GM12878 (cell line): ENCODE measurements at regions of chr7 and their contacts with region 1.

Region 1: DNA sequence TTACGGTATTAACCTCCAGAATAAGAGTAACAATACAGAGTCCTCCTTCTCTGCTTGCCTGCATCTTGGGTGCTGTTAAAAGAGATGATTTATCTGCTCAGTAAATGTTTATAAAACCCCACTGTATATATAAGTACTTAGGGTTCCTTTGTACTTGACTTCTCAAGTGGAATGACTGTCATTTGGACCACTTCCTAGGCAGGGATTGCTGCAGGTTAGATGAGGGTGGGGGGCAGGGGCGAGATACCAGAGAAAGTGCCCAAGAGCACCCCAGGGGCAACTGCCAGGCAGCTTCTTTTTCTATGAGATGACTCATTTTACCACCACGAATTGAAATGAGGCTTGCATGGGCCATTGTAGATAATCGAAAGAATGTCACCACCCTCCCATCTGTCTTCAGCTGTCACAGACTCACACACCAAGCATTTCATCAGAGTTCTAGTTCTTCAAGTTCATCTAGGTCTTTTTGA is 421.9 kb upstream of the GALNT17 start:
- DNase-seq: peak; percentile 73
- ATAC-seq: peak; percentile 91
- H3K4me3 ChIP-seq: no peak overlapping the region
- H3K27ac ChIP-seq: peak overlapping the region; percentile 53; the same call in 1 of the 2 replicates
- H3K4me1 ChIP-seq: peaks cover 16% of the 10 kb centered on the region
- H3K27me3 ChIP-seq: no peaks in the 10 kb centered on the region
- CTCF ChIP-seq: no peak
- EP300 ChIP-seq: peak in 1 of 2 experiments; percentile 64; a peak in 1 of 4 replicates
- POLR2A ChIP-seq: no peak
- RAD21 ChIP-seq: no peak

Region 2: DNA sequence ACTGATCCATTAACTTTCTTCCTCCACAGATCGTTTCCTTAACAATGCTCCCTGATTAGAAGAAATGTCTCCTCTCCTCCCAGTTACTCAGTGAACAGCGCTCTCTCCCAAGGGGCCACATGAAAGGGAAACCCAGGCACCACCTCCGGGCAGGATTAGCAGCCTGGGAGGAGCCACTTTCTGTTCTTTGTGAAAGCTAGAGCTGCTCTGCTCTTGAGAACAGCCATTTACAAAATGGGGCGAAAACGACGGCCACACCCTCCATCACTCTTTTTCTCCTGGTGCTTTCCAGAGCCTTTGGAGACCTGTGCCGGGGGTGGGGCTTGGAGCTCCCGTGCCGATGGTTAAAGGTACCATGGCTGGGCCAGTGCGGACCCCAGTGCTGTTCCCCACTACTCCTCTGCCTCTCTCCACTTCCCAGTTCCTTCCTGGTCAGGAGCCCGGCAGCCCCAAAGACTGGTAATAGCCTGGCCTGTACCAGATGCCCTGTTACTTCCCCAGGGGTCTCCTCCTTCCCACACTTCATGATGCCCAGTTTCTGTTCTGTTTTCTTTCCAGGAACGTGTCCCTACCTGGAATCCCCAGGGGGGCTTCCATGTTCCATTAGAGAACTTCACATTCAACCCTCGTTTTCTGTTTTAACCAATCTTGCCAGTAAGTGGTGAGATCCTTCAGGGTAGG is 19.0 kb after region 1 on chr7:
- CTCF ChIA-PET with region 1: interaction called, 5 read pairs
- POLR2A ChIA-PET with region 1: interaction called, 5 read pairs
- RAD21 ChIA-PET with region 1: interaction called, 3 read pairs
- SMC1A ChIA-PET with region 1: interaction called, 42 read pairs
- in situ Hi-C with region 1: no loop called
- intact Hi-C with region 1: loop called (anchors 2 kb)
- DNase-seq: no peak
- ATAC-seq: peak; percentile 34
- H3K4me3 ChIP-seq: peak overlapping the region; percentile 13; the same call in 1 of the 2 replicates
- H3K27ac ChIP-seq: peak overlapping the region; percentile 89
- H3K4me1 ChIP-seq: peaks cover 37% of the 10 kb centered on the region
- H3K27me3 ChIP-seq: no peaks in the 10 kb centered on the region
- CTCF ChIP-seq: no peak
- EP300 ChIP-seq: no peak
- POLR2A ChIP-seq: peak; percentile 49
- RAD21 ChIP-seq: no peak